ENCODE measurements at regions of chr12 and their contacts with region 1.

Region 1: DNA sequence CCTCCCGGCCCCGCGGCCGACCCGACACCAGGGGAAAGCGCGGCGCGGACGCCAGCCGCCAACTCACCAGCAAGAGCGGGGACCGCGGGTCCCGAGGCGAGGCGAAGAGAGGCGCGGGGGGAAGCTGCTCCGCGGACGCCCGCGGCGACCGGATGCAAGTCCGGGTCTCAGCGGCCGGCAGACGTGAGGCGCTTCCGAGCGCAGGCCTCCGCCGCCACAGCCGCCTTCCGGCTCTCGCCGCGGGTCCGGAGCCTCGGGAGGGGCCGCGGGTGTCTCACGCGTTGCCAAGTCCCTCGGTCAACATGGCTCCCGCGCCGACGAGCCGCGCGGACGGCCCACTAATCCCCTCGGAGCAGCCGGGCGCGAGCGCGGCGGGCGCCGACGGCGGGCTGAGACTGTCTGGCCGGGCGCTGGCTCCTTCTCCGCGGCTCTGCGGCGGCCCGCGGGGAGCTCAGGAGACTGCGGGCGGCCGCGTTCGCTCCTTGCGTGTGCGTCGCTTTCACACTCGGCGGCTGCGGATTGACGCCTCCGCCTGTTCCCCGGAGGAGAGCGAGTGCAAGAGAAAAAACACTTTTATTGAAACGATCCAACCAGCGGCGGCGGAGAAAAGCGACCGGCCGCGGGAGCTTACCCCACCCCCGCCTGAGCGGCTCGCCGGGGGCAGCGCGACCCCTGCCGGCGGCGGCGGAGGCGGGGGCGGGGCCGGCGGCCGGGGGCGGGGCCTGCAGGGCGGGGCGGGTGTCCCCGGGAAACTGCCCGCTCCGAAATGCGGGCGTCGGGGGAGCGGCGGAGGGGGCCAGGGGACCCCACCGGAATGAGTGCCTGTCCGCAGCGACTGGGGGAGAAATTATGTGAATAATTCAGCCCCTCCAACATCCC is at the start of gene CDK17:
- DNase-seq: peak; percentile 91
- ATAC-seq: peak; percentile 72
- H3K4me3 Mint-ChIP-seq: peak within 1 kb of the TSS; percentile 95
- H3K27ac Mint-ChIP-seq: peak within 1 kb of the TSS; percentile 95
- H3K4me1 Mint-ChIP-seq: peaks cover 61% of the 10 kb centered on the region
- H3K27me3 Mint-ChIP-seq: no peaks in the 10 kb centered on the region
- CTCF ChIP-seq: no peak
- total RNA-seq, gene CDK17: 52.1 and 57.3 TPM in 2 replicates

Region 2: DNA sequence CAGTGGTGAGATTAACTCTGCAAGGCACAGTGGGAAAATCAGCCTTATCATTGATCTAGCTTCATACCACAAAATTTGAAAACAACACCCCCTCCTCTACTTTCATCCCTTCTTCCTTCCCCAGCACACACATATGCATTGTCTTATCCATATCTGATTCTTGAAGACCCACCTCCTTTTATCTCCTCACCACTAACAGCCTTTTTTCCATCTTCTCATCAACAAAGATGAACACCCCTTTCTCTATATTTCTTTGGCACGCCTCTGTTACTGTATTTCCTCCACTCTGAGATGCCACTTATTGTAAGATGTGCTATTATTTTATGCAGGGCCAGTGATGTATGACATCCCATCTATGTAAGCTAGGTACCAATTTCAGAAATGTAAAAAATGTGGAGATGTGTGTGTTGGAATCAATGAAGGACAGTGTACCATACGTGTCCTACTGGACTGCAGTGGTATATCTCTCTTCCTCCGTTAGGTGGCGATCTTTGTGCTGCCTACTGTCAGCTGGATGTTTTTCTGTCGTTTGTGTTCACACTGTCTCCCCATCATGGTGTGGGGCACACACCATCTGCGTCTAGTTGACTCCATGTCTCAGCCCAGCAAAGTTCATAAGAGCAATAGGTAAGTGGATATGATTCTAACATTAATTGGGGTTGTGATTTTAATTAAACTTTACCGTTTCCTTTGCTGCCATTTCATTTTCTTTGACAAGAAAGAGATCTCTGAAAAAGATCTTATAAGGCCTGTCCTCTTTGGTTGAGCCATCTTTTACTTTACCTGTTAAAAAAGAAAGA is 481.8 kb before region 1 on chr12:
- CTCF ChIA-PET with region 1: no interaction called
- POLR2A ChIA-PET with region 1: no interaction called
- intact Hi-C with region 1: loop called (anchors 10 kb)
- DNase-seq: no peak
- ATAC-seq: peak; percentile 82
- H3K4me3 Mint-ChIP-seq: no peak overlapping the region
- H3K27ac Mint-ChIP-seq: no peak overlapping the region
- H3K4me1 Mint-ChIP-seq: no peaks in the 10 kb centered on the region
- H3K27me3 Mint-ChIP-seq: peaks cover 6% of the 10 kb centered on the region
- CTCF ChIP-seq: peak; percentile 43

Region 3: DNA sequence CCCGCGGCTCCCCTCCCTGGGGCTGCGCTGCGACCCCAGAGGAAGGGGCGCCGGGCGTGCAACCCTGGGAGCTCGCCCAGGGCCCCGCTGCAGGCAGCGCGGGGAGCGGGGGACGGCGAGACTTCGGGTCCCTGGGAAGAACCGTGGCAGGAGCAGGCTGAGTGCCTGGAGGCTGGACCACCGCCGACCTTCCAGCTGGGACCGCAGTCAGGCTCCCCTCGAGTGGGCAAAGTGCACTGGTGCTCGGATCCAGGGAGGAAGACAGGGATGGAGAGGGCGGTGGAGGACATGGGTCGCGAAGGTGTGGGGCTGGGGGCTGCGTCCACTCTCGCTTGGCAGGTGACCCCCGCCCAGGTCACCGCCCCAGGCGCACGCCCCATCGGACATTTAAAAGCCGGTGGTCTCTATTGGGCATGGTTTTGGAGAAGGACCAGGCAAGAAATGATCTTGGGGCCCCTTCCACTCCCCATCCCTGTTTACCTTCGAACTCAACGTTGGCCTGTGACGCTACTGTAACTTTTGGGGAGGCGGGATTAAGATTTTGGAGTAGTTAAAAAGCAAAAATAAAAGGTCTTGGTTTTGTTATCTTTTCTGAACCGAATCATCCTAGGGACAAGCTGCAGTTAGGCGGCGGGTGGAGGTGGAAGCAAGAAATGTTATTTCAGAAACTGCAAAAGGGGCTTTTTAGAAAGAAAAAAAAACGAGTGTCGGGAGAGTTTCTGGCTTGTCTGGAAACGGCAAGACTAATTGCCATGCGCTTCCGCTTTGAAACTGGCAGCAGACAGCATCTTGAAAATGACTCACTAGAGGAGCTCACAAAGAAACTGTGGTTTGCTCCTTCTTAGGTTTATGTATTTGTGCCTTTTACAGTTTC is 204.9 kb before region 1 on chr12:
- CTCF ChIA-PET with region 1: interaction called, 3 read pairs
- POLR2A ChIA-PET with region 1: interaction called, 15 read pairs
- intact Hi-C with region 1: loop called (anchors 2 kb)
- DNase-seq: peak; percentile 45
- ATAC-seq: peak; percentile 57
- H3K4me3 Mint-ChIP-seq: peak overlapping the region; percentile 99
- H3K27ac Mint-ChIP-seq: peak overlapping the region; percentile 99
- H3K4me1 Mint-ChIP-seq: peaks cover 72% of the 10 kb centered on the region
- H3K27me3 Mint-ChIP-seq: no peaks in the 10 kb centered on the region
- CTCF ChIP-seq: no peak

Region 4: DNA sequence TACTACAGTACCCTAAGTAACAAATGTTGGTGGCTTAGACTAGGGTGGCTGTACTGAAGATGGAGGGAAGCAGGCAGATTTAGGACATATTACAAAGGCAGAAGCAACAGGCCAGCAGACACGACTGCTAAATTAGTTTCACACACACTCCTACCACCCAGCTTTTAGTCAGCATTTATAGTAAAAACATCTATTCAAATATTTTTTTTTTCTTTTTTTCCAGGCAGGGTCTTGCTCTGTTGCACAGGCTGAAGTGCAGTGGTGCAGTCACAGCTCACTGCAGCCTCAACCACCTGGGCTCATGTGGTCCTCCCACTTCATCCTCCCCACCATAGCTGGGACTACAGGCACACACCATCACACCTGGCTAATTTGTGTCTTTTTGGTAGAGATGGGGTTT is 72.8 kb before region 1 on chr12:
- CTCF ChIA-PET with region 1: no interaction called
- POLR2A ChIA-PET with region 1: interaction called, 16 read pairs
- intact Hi-C with region 1: loop called (anchors 5 kb)
- DNase-seq: no peak
- ATAC-seq: peak; percentile 85
- H3K4me3 Mint-ChIP-seq: peak overlapping the region; percentile 6
- H3K27ac Mint-ChIP-seq: peak overlapping the region; percentile 77
- H3K4me1 Mint-ChIP-seq: peaks cover 50% of the 10 kb centered on the region
- H3K27me3 Mint-ChIP-seq: no peaks in the 10 kb centered on the region
- CTCF ChIP-seq: no peak

Region 5: GRCh38 chr12:96456265-96456974 is 56.3 kb after region 1 on chr12:
- CTCF ChIA-PET with region 1: interaction called, 4 read pairs
- POLR2A ChIA-PET with region 1: interaction called, 17 read pairs
- intact Hi-C with region 1: loop called (anchors 1 kb)
- DNase-seq: no peak
- ATAC-seq: peak; percentile 94
- H3K4me3 Mint-ChIP-seq: peak overlapping the region; percentile 55
- H3K27ac Mint-ChIP-seq: peak overlapping the region; percentile 62
- H3K4me1 Mint-ChIP-seq: peaks cover 28% of the 10 kb centered on the region
- H3K27me3 Mint-ChIP-seq: no peaks in the 10 kb centered on the region
- CTCF ChIP-seq: no peak

Region 6: GRCh38 chr12:96571101-96571862 is 171.1 kb after region 1 on chr12:
- CTCF ChIA-PET with region 1: no interaction called
- POLR2A ChIA-PET with region 1: interaction called, 4 read pairs
- intact Hi-C with region 1: loop called (anchors 2 kb)
- DNase-seq: no peak
- ATAC-seq: peak; percentile 74
- H3K4me3 Mint-ChIP-seq: peak overlapping the region; percentile 74
- H3K27ac Mint-ChIP-seq: peak overlapping the region; percentile 89
- H3K4me1 Mint-ChIP-seq: peaks cover 30% of the 10 kb centered on the region
- H3K27me3 Mint-ChIP-seq: no peaks in the 10 kb centered on the region
- CTCF ChIP-seq: no peak

Measured in activated B cell treated with CpG ODN at 0.5 μM for 24 hours (primary cell).